Kidney (tissue), 22 donors: ENCODE measurements at regions of chr22 and their contacts with region 1.

Region 1: GRCh38 chr22:32528984-32529982 is 54.7 kb downstream of the FBXO7 start:
- DNase-seq: peak; percentile 89 to 95 (median 90)
- H3K4me3 ChIP-seq: no peak overlapping the region
- H3K27ac ChIP-seq: peak overlapping the region; percentile 43 to 79
- H3K4me1 ChIP-seq: peaks cover 0 to 31% (median 23%) of the 10 kb centered on the region in 3 donors
- H3K27me3 ChIP-seq: no peaks in the 10 kb centered on the region
- CTCF ChIP-seq: peak; percentile 88

Region 2: GRCh38 chr22:32644252-32645100 is 115.2 kb after region 1 on chr22:
- intact Hi-C with region 1: no loop called
- DNase-seq: peak; percentile 60 to 90 (median 62)
- H3K4me3 ChIP-seq: no peak overlapping the region
- H3K27ac ChIP-seq: peak overlapping the region; percentile 82 to 94
- H3K4me1 ChIP-seq: peaks cover 4 to 8% (median 8%) of the 10 kb centered on the region in 3 donors
- H3K27me3 ChIP-seq: no peaks in the 10 kb centered on the region
- CTCF ChIP-seq: no peak

Region 3: DNA sequence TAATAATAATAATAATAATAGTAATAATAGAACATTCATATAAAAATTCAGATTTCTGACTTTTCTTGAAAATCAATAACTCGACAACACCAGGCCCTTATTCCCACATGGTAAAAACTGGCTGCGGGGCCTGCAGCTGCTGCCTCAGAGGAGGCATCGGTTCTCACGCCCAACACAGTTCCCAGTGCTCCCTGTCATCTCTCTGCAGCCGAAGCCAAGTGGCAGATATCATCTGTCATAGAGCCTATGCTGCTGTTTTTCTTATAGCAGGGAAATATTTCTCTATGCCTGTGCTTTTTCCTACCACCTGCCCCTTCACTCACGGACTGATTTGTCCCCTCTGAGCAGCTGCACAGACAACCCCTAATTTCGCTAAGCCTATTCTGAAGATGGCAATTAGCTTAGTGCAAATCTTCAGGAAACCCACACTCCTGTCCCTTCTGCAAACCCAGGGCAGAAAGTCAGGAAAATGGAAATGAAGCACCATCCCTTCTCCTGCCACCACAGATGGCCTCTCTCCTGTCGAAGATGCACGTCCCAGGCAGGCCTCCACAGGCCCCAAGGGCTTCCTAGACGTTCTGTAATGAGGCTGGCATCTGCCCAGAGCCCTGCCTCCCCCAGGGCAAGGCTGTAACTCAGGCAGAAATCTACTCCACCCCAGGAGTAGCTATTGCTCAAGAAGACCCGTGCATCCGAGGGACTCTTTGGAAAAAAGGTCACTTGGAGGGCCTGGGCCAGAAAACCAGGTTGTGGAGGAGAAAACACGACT is 462.3 kb after region 1 on chr22:
- intact Hi-C with region 1: loop called (anchors 10 kb)
- DNase-seq: peak in 1 of 5 donors; percentile 24
- H3K4me3 ChIP-seq: no peak overlapping the region
- H3K27ac ChIP-seq: no peak overlapping the region
- H3K4me1 ChIP-seq: no peaks in the 10 kb centered on the region
- H3K27me3 ChIP-seq: no peaks in the 10 kb centered on the region
- CTCF ChIP-seq: no peak